Activated CD4-positive, alpha-beta T cell treated with anti-CD3 and anti-CD28 coated beads, Interleukin-2, amount 10 ng/mL, durations not matched to agents 24 days and 14 days (primary cell): ENCODE measurements at regions of chr15 and their contacts with region 1.

Region 1: DNA sequence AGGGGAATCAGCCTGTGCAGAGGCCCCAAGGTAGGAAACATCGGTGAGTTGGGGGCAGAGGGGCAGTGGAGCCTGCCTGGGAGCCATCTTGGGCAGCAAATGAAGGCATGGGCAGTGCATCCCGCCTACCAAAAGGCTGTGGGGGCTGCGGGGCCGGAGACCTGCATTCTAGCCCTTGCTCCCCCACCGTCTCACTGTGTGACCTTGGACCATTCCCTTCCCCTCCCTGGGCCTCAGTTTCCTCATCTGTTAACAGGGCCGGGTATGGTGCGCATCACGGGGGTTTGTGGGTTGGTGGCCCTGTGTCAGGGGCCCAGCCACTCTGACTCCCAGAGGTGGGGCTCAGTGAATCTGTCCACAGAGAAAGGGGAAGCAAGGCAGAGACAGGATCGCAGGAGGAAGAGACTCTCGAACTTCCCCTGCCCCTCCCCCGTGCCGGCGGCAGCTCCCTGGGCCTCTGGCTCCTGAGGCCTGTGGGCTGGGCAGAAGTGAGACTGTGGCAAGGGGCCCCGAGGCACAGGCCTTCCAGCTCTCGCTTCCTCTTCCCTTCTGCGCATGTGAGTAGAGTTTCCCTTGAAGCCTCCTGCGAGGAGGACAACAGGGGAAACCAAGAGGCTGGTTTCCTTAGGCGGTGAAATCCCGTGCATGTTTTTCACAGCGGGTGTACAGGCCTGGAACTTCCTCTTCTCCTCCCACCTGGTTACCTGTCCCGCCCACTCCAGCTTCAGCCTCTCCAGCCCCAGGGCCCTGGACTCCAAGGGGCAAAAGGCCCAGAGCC is 42.9 kb downstream of the IDH2 start:
- DNase-seq: peak; percentile 92
- H3K4me3 Mint-ChIP-seq: peak overlapping the region; percentile 68
- H3K27ac Mint-ChIP-seq: peak overlapping the region; percentile 93
- H3K4me1 Mint-ChIP-seq: peaks cover 35% of the 10 kb centered on the region
- H3K27me3 Mint-ChIP-seq: no peaks in the 10 kb centered on the region

Region 2: GRCh38 chr15:90001683-90002427 is 57.5 kb before region 1 on chr15:
- intact Hi-C with region 1: loop called (anchors 1 kb)
- DNase-seq: peak; percentile 90
- H3K4me3 Mint-ChIP-seq: peak overlapping the region; percentile 88
- H3K27ac Mint-ChIP-seq: peak overlapping the region; percentile 92
- H3K4me1 Mint-ChIP-seq: peaks cover 40% of the 10 kb centered on the region
- H3K27me3 Mint-ChIP-seq: peaks cover 4% of the 10 kb centered on the region

Region 3: DNA sequence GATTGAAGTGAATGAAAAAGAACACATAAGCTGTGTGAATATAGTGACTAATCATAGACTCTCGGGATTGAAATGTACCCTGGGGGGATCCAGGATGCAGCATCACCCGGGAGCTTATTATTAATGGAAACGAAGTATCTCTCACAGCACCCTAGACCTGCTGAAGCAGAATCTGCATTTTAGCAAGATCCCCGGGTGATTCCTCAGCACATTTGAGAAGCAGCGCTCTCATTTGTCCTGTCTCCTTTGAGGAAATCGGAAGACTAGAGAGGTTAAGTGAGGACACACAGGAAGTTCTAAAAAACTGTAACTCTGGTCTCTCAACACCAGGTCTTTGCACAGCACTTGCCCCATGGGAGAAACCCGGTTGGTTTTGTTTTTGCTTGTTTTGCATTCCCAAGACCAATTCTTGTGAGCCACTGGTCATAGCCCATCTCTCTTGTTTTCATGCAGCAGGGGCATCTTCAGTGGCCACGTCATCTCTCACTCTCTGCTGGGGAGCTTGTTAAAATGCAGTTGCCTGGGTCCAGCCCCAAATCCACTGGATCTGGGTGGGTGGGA is 28.1 kb before region 1 on chr15:
- intact Hi-C with region 1: loop called (anchors 1 kb)
- DNase-seq: peak; percentile 70
- H3K4me3 Mint-ChIP-seq: peak overlapping the region; percentile 57
- H3K27ac Mint-ChIP-seq: peak overlapping the region; percentile 81
- H3K4me1 Mint-ChIP-seq: peaks cover 46% of the 10 kb centered on the region
- H3K27me3 Mint-ChIP-seq: no peaks in the 10 kb centered on the region

Region 4: GRCh38 chr15:90037961-90038631 is 21.3 kb before region 1 on chr15:
- intact Hi-C with region 1: loop called (anchors 1 kb)
- DNase-seq: peak; percentile 80
- H3K4me3 Mint-ChIP-seq: peak overlapping the region; percentile 48
- H3K27ac Mint-ChIP-seq: peak overlapping the region; percentile 79
- H3K4me1 Mint-ChIP-seq: peaks cover 65% of the 10 kb centered on the region
- H3K27me3 Mint-ChIP-seq: no peaks in the 10 kb centered on the region

Region 5: GRCh38 chr15:90099868-90100831 is 40.8 kb after region 1 on chr15:
- intact Hi-C with region 1: loop called (anchors 5 kb)
- DNase-seq: peak; percentile 74
- H3K4me3 Mint-ChIP-seq: peak overlapping the region; percentile 86
- H3K27ac Mint-ChIP-seq: peak overlapping the region; percentile 98
- H3K4me1 Mint-ChIP-seq: peaks cover 70% of the 10 kb centered on the region
- H3K27me3 Mint-ChIP-seq: peaks cover 8% of the 10 kb centered on the region